H1 (cell line): ENCODE measurements at regions of chr1 and their contacts with region 1.

Region 1: DNA sequence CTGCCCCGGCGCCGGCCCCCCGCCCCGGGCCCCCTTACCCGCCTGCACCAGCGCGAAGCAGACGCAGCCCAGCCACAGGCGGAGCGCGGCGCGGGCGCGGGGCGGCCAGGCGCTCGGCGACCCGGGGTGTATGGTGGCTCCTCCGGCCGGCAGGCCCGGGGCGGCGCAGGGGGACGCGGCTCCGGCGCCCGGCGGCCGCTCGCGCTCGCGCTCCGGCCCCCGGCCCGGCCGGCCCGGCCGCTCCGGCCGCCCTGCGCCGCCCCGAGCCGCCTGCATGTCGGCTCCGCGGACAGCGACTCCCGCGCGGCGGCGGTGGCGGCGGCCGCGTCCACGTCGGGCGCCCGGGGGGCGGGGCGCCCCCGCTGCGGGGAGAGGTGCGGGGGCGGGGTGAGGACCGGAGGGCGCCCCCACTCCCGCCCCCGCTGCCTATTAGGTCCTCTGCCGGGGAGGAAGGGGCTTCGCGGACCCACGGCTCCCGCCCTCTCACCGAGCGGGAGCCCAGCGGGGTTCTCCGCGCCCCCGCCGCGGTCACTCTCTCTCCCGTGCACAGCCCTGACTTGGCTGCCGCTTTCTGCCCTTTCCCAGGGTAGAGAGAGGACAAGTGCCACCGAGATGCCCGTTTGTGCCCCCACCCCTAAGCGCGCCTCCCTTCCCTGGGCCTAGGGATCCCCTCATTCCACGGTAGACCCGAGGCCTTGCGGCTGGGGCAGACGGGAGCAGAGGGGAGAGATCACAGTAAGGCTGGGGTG is at the start of gene FNDC5:
- DNase-seq: no peak
- H3K4me3 ChIP-seq: peak within 1 kb of the TSS; percentile 28 to 65 (median 37)
- H3K27ac ChIP-seq: no peak within 1 kb of the TSS
- H3K4me1 ChIP-seq: peaks cover 6 to 27% (median 21%) of the 10 kb centered on the region in 4 experiments
- H3K27me3 ChIP-seq: peaks cover 6 to 35% (median 28%) of the 10 kb centered on the region in 4 experiments
- CTCF ChIP-seq: no peak
- EP300 ChIP-seq: no peak
- POLR2A ChIP-seq: no peak
- RAD21 ChIP-seq: no peak
- total RNA-seq, gene FNDC5: 0.94 and 2.0 TPM in 2 replicates

Region 2: GRCh38 chr1:32753532-32754312 is 117.1 kb before region 1 on chr1:
- CTCF ChIA-PET with region 1: no interaction called
- POLR2A ChIA-PET with region 1: no interaction called
- DNase-seq: peak; percentile 59 to 91
- H3K4me3 ChIP-seq: peak overlapping the region; percentile 79 to 100 (median 94)
- H3K27ac ChIP-seq: peak overlapping the region; percentile 92
- H3K4me1 ChIP-seq: peaks cover 16 to 37% (median 22%) of the 10 kb centered on the region in 4 experiments
- H3K27me3 ChIP-seq: no peaks in the 10 kb centered on the region
- CTCF ChIP-seq: peak in 1 of 3 experiments; percentile 26; a peak in 1 of 4 replicates
- EP300 ChIP-seq: no peak
- POLR2A ChIP-seq: peak in 1 of 2 experiments; percentile 70; a peak in 2 of 3 replicates
- RAD21 ChIP-seq: peak; percentile 3 to 15; a peak in 2 of 4 replicates

Region 3: DNA sequence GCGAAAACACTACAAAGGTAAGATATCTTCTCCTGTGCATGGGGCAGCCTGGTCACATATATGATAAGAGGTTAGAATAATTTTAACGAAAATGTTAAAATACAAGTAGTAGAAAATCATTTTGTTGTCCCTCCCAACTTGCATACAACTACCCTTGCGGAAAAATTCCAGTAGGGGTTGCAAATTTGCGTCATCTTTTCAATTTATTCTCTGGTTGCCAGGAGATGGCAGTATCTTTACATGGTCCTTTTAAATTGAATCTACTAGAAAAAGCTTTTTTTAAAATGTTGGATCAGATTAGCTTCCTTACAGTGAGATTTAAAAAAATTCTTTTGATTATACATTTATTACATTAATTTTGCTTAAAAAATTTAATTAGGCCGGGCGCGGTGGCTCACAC is 42.4 kb before region 1 on chr1:
- CTCF ChIA-PET with region 1: interaction called, 12 read pairs
- POLR2A ChIA-PET with region 1: interaction called, 4 read pairs
- DNase-seq: no peak
- H3K4me3 ChIP-seq: no peak overlapping the region
- H3K27ac ChIP-seq: no peak overlapping the region
- H3K4me1 ChIP-seq: no peaks in the 10 kb centered on the region
- H3K27me3 ChIP-seq: no peaks in the 10 kb centered on the region
- CTCF ChIP-seq: peak in 1 of 3 experiments; percentile 30; a peak in 1 of 4 replicates
- EP300 ChIP-seq: no peak
- POLR2A ChIP-seq: no peak
- RAD21 ChIP-seq: no peak

Region 4: GRCh38 chr1:32886004-32886827 is 15.4 kb after region 1 on chr1 and contains the start of gene HPCA:
- CTCF ChIA-PET with region 1: interaction called, 382 read pairs
- POLR2A ChIA-PET with region 1: interaction called, 10 read pairs
- DNase-seq: peak in 1 of 2 experiments; percentile 99
- H3K4me3 ChIP-seq: peak within 1 kb of the TSS in 2 of 4 experiments; percentile 10 to 53; a peak in 4 of 8 replicates
- H3K27ac ChIP-seq: no peak within 1 kb of the TSS
- H3K4me1 ChIP-seq: peaks cover 0 to 14% (median 5%) of the 10 kb centered on the region in 4 experiments; a peak in 4 of 7 replicates
- H3K27me3 ChIP-seq: peaks cover 3 to 41% (median 20%) of the 10 kb centered on the region in 4 experiments; a peak in 6 of 7 replicates
- CTCF ChIP-seq: peak in 2 of 3 experiments; percentile 89 to 95; a peak in 3 of 4 replicates
- EP300 ChIP-seq: 0 out of 3 replicates have a peak, but pooled peaks of 1 of the 2 experiments have one; percentile 43
- POLR2A ChIP-seq: no peak
- RAD21 ChIP-seq: peak; percentile 47 to 74
- total RNA-seq, gene HPCA: 0.84 and 1.4 TPM in 2 replicates

Region 5: GRCh38 chr1:32953495-32953894 is 82.7 kb after region 1 on chr1:
- CTCF ChIA-PET with region 1: no interaction called
- POLR2A ChIA-PET with region 1: no interaction called
- DNase-seq: no peak
- H3K4me3 ChIP-seq: no peak overlapping the region
- H3K27ac ChIP-seq: no peak overlapping the region
- H3K4me1 ChIP-seq: no peaks in the 10 kb centered on the region; a peak in 1 of 7 replicates
- H3K27me3 ChIP-seq: no peaks in the 10 kb centered on the region
- CTCF ChIP-seq: no peak
- EP300 ChIP-seq: no peak
- POLR2A ChIP-seq: no peak
- RAD21 ChIP-seq: no peak

Region 6: GRCh38 chr1:33030575-33030974 is 159.8 kb after region 1 on chr1:
- CTCF ChIA-PET with region 1: no interaction called
- POLR2A ChIA-PET with region 1: no interaction called
- DNase-seq: no peak
- H3K4me3 ChIP-seq: no peak overlapping the region
- H3K27ac ChIP-seq: no peak overlapping the region
- H3K4me1 ChIP-seq: peaks cover 0 to 3% (median 2%) of the 10 kb centered on the region in 4 experiments; a peak in 5 of 7 replicates
- H3K27me3 ChIP-seq: no peaks in the 10 kb centered on the region
- CTCF ChIP-seq: no peak
- EP300 ChIP-seq: no peak
- POLR2A ChIP-seq: no peak
- RAD21 ChIP-seq: no peak